Activated T-helper 1 cell treated with anti-CD3 and anti-CD28 coated beads, Interleukin-12 subunit alpha, Interleukin-12 subunit beta, Interleukin-2, Interleukin-4 antibody, amounts not matched to agents 30 ng/mL and 10 ng/mL and 1 ng/mL, durations not matched to agents 14 hours and 24 hours and 36 hours (primary cell): ENCODE measurements at regions of chr9 and their contacts with region 1.

Region 1: DNA sequence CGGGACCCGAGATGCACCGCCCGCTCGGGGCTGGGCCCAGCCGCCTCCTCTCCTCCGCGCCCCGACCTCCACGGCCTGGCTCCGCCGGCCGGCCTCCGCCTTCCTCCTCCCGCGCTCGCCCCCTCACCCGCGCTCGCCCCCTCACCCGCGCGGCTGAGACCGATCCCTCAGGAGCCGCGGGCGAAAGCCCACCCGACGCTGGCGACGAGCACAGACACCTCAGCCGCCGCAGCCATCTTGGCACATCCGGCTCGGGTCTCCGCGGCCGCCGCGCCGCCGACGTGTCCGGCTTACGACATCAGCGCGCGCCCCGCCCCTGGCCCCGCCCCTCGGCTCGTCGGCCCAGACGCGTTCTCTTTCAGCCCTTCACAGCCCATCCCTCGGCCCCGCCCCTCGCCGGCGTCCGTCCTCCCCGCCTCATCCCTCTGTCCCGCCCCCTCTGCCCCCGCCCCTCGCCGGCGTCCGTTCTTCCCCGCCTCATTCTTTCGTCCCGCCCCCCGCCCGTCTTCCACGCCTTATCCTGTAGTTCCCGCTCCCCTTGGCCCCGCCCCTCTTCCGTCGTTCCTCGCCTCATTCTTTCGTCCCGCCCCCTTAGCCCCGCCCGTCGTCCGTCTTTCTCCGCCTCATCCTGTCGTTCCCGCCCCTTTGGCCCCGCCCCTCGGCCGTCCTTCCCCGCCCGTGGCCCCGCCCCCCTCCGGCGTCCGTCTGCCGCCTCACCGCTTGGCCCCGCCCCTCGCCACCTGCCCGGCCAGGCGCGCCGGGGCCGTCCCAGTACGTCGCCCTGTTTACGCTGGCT is at the start of gene SEC16A:
- DNase-seq: peak; percentile 98
- H3K4me3 Mint-ChIP-seq: peak within 1 kb of the TSS; percentile 96
- H3K27ac Mint-ChIP-seq: peak within 1 kb of the TSS; percentile 95
- H3K4me1 Mint-ChIP-seq: peaks cover 23% of the 10 kb centered on the region
- H3K27me3 Mint-ChIP-seq: no peaks in the 10 kb centered on the region
- total RNA-seq, gene SEC16A: 87.3 and 88.5 TPM in 2 replicates

Region 2: DNA sequence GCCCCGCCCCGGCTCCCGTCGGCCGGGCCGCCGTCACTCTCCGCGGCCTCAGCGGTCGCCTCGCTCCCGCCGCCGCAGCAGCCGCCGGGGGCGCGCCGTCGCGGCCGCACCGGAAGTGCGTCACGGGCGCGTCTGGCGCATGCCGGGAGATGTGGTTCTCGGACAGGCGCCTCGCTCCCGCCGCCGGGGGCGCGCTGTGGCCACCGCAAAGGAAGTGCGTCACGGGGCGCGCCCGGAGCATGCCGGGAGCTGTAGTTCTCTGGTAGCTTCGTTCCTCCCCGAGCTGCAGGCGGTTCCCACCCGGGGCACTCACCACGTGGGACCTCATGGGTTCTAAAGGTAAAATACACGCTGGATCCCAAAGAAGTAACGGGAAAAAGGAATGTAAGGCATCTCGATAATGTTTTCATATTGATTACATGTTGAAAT is 521.7 kb before region 1 on chr9 and contains the start of gene UBAC1:
- intact Hi-C with region 1: loop called (anchors 5 kb)
- DNase-seq: peak; percentile 93
- H3K4me3 Mint-ChIP-seq: peak within 1 kb of the TSS; percentile 87
- H3K27ac Mint-ChIP-seq: peak within 1 kb of the TSS; percentile 82
- H3K4me1 Mint-ChIP-seq: peaks cover 25% of the 10 kb centered on the region
- H3K27me3 Mint-ChIP-seq: peaks cover 8% of the 10 kb centered on the region
- total RNA-seq, gene UBAC1: 41.9 and 42.0 TPM in 2 replicates

Region 3: GRCh38 chr9:136410500-136411287 is 72.3 kb before region 1 on chr9 and contains the starts of genes ENTR1 and PMPCA:
- intact Hi-C with region 1: loop called (anchors 2 kb)
- DNase-seq: peak; percentile 93
- H3K4me3 Mint-ChIP-seq: peak within 1 kb of the TSS; percentile 97
- H3K27ac Mint-ChIP-seq: peak within 1 kb of the TSS; percentile 94
- H3K4me1 Mint-ChIP-seq: peaks cover 35% of the 10 kb centered on the region
- H3K27me3 Mint-ChIP-seq: peaks cover 3% of the 10 kb centered on the region
- total RNA-seq, gene ENTR1: 50.0 and 54.5 TPM in 2 replicates
- total RNA-seq, gene PMPCA: 104 and 114 TPM in 2 replicates

Region 4: DNA sequence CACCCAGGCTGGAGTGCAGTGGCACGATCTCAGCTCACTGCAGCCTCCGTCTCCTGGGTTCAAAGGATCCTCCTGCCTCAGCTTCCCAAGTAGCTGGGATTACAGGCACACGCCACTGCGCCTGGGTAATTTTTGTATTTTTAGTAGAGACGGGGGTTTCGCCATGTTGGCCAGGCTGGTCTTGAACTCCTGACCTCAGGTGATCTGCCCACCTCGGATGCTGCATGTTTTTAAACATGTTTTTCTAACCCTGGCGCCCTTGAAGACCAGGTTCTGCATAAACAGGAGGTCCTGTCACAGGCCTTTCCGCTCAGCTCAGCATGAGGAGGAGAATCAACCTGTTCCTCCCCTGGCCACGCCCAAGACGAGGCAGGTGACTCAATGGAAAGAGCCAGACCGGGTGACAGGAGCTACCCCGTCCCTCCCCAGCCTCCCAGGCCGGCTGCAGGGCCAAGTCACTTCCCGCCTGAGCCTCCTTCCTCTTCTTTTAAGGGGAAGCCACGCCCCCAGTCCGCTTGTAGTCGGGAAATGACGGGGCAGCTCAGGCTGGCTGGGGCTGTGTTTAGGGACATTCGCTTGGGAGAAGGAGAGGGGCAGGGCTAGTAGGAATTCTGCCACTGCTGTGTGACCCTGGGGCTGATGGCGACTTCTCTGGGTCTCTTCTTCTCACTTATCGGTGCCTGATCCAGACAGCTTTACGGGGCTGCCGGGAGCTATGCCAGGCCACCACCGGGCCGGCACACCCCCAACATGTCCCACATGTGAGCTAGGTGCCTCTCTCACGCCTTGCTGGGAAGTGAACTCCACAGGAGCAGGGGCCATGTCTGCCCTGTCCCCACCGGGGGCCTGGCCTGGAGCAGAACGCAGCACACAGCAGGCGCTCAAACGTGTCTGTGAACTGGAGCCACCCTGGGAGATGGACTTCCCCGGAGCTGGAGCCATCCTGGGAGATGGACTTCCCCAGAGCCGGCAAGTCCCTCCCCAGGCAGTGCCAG is 56.7 kb after region 1 on chr9:
- intact Hi-C with region 1: loop called (anchors 1 kb)
- DNase-seq: peak; percentile 91
- H3K4me3 Mint-ChIP-seq: peak overlapping the region; percentile 93
- H3K27ac Mint-ChIP-seq: peak overlapping the region; percentile 100
- H3K4me1 Mint-ChIP-seq: peaks cover 34% of the 10 kb centered on the region
- H3K27me3 Mint-ChIP-seq: no peaks in the 10 kb centered on the region

Region 5: GRCh38 chr9:136644598-136645351 is 161.8 kb after region 1 on chr9:
- intact Hi-C with region 1: loop called (anchors 1 kb)
- DNase-seq: peak; percentile 54
- H3K4me3 Mint-ChIP-seq: no peak overlapping the region
- H3K27ac Mint-ChIP-seq: no peak overlapping the region
- H3K4me1 Mint-ChIP-seq: no peaks in the 10 kb centered on the region
- H3K27me3 Mint-ChIP-seq: peaks cover 33% of the 10 kb centered on the region

Region 6: DNA sequence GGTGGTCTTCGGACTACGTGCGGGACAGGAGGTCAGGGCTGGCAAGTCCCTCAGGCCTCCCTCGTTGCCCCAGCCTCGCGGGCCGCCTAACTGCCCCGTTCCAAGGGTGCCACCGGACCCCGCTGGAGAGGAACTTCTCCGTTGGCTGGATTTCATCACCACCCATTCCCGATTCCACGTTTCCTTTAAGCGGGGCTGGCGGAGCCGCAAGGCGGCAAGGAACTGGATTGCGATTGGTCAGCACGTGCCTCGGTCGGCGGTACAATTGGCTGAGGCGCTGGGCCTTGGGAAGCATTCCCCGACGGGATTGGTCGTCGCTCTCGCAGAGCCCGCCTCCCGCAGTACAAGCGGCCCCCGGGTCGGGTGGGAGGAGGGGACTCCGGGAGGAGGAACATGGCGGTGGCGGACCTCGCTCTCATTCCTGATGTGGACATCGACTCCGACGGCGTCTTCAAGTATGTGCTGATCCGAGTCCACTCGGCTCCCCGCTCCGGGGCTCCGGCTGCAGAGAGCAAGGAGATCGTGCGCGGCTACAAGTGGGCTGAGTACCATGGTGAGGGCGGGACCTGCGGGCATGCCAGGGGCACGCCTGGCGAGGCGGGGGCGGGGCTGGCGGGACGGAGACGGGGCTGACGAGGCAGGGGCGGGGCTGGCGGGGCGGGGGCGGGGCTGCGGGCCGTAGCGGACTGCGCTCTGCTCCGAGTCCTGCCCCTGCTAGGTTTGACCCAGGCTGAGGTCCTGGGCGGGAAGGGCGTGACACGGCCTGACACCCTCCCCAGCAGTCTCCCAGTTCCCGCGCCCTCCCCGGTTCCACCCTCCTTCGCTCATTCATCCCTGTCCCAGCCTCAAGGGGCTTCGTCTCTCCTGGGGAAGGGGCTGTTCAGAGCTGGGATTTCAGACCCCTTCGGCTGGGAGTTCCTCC is 366.3 kb after region 1 on chr9 and contains the start of gene PHPT1:
- intact Hi-C with region 1: loop called (anchors 2 kb)
- DNase-seq: peak; percentile 97
- H3K4me3 Mint-ChIP-seq: peak within 1 kb of the TSS; percentile 94
- H3K27ac Mint-ChIP-seq: peak within 1 kb of the TSS; percentile 89
- H3K4me1 Mint-ChIP-seq: no peaks in the 10 kb centered on the region
- H3K27me3 Mint-ChIP-seq: peaks cover 6% of the 10 kb centered on the region
- total RNA-seq, gene PHPT1: 134 and 139 TPM in 2 replicates

Region 7: DNA sequence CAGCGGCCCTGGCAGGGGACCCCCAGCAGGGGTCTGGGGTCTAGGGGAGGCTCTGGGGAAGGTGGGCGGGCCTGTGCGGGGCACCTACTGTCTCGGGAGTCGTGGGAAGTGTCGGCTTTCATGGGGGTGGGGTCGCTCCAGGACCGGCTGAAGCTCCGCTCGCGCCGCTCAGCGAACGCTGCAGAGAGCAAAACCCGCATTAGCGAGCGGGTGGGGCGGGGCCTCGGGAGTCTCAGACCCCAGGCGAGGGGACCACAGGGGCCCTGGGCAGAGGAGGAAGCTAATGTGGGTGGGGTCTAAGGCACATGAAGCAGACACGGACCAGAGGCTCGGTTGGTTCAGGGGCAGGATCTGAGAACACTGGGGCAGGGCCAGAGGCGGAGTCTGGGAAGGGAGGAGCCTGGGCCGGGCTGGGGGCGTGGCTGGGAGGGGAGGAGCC is 970.7 kb after region 1 on chr9:
- intact Hi-C with region 1: loop called (anchors 5 kb)
- DNase-seq: peak; percentile 59
- H3K4me3 Mint-ChIP-seq: peak overlapping the region; percentile 49
- H3K27ac Mint-ChIP-seq: no peak overlapping the region
- H3K4me1 Mint-ChIP-seq: peaks cover 10% of the 10 kb centered on the region
- H3K27me3 Mint-ChIP-seq: no peaks in the 10 kb centered on the region